H1 (cell line): ENCODE measurements at regions of chr22 and their contacts with region 1.

Region 1: DNA sequence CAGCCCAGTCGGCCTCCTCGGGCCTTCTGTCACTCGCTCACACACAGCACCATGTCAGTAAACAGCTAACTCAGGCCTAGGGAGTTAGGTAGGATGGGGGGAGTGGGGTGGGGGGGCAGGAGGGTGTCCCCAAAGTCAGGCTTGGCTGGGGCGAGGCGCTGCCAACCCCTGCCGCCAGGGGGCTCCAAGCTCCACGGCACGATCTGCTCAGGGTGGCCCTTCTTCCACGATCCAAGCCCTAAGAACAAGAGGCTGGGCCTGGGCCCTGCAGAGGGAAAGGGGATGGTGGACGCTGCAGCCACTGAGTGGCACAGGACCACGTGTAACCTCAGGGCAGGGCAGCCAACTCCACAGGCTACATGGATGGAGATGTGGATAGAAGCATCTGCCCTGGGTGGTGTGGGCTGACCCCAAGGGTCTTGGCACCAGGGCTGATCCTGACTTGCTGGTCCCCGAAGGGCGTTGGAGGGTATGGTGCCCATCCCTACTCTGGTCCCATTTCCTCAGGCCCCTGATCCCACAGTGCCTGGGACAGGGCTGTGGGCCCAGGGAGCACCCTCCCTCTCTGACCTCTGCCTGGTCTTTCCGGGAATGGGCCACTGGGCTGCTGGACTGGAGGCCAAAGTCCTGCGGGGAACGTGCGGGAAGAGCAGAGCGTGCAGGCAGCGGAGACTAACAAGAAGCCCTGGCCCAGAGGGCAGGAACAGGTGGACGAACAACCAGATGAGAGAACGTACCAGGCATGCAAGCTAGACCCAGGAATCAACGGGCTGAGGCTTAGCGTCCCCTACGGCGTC is 29.1 kb upstream of the TXNRD2 start:
- DNase-seq: peak in 1 of 2 experiments; percentile 96
- H3K4me3 ChIP-seq: no peak overlapping the region
- H3K27ac ChIP-seq: no peak overlapping the region
- H3K4me1 ChIP-seq: peaks cover 3 to 11% (median 10%) of the 10 kb centered on the region in 4 experiments; a peak in 6 of 7 replicates
- H3K27me3 ChIP-seq: no peaks in the 10 kb centered on the region
- CTCF ChIP-seq: peak; percentile 89 to 99 (median 93)
- EP300 ChIP-seq: no peak
- POLR2A ChIP-seq: no peak
- RAD21 ChIP-seq: peak; percentile 92 to 93

Region 2: GRCh38 chr22:19479357-19480172 is 491.1 kb before region 1 on chr22 and contains the start of gene CDC45:
- CTCF ChIA-PET with region 1: no interaction called
- POLR2A ChIA-PET with region 1: no interaction called
- DNase-seq: peak; percentile 88
- H3K4me3 ChIP-seq: peak within 1 kb of the TSS; percentile 87 to 99 (median 94)
- H3K27ac ChIP-seq: peak within 1 kb of the TSS; percentile 100
- H3K4me1 ChIP-seq: peaks cover 0 to 8% (median 1%) of the 10 kb centered on the region in 4 experiments; a peak in 2 of 7 replicates
- H3K27me3 ChIP-seq: no peaks in the 10 kb centered on the region
- CTCF ChIP-seq: no peak
- EP300 ChIP-seq: no peak
- POLR2A ChIP-seq: peak; percentile 73 to 86
- RAD21 ChIP-seq: no peak
- total RNA-seq, gene CDC45: 31.9 and 32.6 TPM in 2 replicates

Region 3: DNA sequence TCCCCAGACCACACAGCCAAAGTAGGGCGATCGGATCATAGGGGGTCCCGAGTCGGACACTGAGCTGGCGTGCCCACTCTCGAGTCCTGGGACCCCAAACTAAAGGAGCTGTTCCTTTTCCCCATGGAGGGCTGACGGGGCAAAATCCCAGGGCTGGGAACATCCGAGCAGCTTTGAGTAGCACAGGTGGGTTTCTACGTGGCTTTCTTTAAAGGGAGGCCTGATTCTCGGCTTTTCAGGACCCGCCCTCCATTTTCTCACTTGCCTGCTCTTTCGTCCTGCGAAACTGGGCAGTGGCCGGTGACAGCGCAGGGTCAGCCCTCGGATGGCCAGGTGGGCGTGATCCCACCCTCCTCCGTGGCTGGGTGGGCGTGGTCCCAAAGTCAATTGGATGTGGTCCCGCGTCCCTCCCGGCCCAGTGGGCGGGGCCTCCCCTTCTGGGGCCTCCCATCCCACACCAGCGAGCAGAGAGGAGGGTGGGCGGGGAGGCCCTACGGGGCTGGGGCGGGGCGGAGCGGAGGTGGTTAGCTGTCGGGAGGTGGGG is 11.6 kb before region 1 on chr22:
- CTCF ChIA-PET with region 1: interaction called, 15 read pairs
- POLR2A ChIA-PET with region 1: interaction called, 6 read pairs
- DNase-seq: peak; percentile 81 to 98
- H3K4me3 ChIP-seq: peak overlapping the region; percentile 38 to 61 (median 52); a peak in 7 of 8 replicates
- H3K27ac ChIP-seq: no peak overlapping the region
- H3K4me1 ChIP-seq: peaks cover 0 to 23% (median 18%) of the 10 kb centered on the region in 4 experiments; a peak in 6 of 7 replicates
- H3K27me3 ChIP-seq: no peaks in the 10 kb centered on the region
- CTCF ChIP-seq: no peak
- EP300 ChIP-seq: no peak
- POLR2A ChIP-seq: peak in 1 of 2 experiments; percentile 61; a peak in 2 of 3 replicates
- RAD21 ChIP-seq: no peak

Region 4: GRCh38 chr22:19986410-19987341 is 16.0 kb after region 1 on chr22:
- CTCF ChIA-PET with region 1: interaction called, 58 read pairs
- POLR2A ChIA-PET with region 1: interaction called, 13 read pairs
- DNase-seq: peak in 1 of 2 experiments; percentile 89
- H3K4me3 ChIP-seq: peak overlapping the region; percentile 74 to 88 (median 82)
- H3K27ac ChIP-seq: peak overlapping the region; percentile 57; the same call in 1 of the 2 replicates
- H3K4me1 ChIP-seq: peaks cover 0 to 17% (median 11%) of the 10 kb centered on the region in 4 experiments; a peak in 5 of 7 replicates
- H3K27me3 ChIP-seq: no peaks in the 10 kb centered on the region
- CTCF ChIP-seq: no peak
- EP300 ChIP-seq: no peak
- POLR2A ChIP-seq: peak in 1 of 2 experiments; percentile 80; a peak in 2 of 3 replicates
- RAD21 ChIP-seq: no peak

Region 5: DNA sequence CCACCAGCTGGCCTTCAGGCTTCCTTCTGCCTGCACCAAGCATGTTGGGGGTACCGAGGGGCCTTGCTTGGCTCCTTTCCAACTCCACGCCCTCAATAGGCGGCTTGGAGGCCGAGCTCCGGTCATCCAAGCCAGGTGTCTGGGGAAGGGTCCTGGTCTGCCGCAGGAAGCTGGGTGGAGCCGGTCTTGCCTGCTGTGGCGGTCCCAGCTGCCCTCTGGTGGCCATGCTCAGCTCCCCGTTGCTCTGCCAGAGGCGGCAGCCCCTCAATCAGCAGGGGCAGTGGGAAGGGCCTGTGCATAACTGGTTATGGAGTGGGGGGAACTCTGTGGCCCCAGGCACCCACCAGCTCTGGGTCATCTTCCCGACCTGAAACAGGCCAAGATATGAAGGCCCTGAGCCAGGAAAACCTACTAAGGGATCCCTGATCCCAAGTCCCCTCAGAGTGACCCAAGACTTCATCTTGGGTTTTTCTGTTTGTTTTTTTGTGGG is 42.8 kb after region 1 on chr22:
- CTCF ChIA-PET with region 1: interaction called, 369 read pairs
- POLR2A ChIA-PET with region 1: interaction called, 17 read pairs
- DNase-seq: peak; percentile 47 to 85
- H3K4me3 ChIP-seq: no peak overlapping the region
- H3K27ac ChIP-seq: peak overlapping the region; percentile 21; the same call in 1 of the 2 replicates
- H3K4me1 ChIP-seq: peaks cover 0 to 8% (median 3%) of the 10 kb centered on the region in 4 experiments; a peak in 4 of 7 replicates
- H3K27me3 ChIP-seq: peaks cover 11 to 28% (median 24%) of the 10 kb centered on the region in 4 experiments
- CTCF ChIP-seq: peak; percentile 89 to 95 (median 94)
- EP300 ChIP-seq: no peak
- POLR2A ChIP-seq: no peak
- RAD21 ChIP-seq: peak; percentile 89 to 96

Region 6: GRCh38 chr22:20079745-20080444 is 109.2 kb after region 1 on chr22 and contains the start of gene DGCR8:
- CTCF ChIA-PET with region 1: interaction called, 12 read pairs
- POLR2A ChIA-PET with region 1: interaction called, 4 read pairs
- DNase-seq: peak; percentile 64 to 91
- H3K4me3 ChIP-seq: peak within 1 kb of the TSS; percentile 81 to 99 (median 92)
- H3K27ac ChIP-seq: peak within 1 kb of the TSS; percentile 79
- H3K4me1 ChIP-seq: peaks cover 3 to 19% (median 11%) of the 10 kb centered on the region in 4 experiments
- H3K27me3 ChIP-seq: no peaks in the 10 kb centered on the region
- CTCF ChIP-seq: 0 out of 4 replicates have a peak, but pooled peaks of 1 of the 3 experiments have one; percentile 3
- EP300 ChIP-seq: no peak; a peak in 1 of 3 replicates
- POLR2A ChIP-seq: peak; percentile 73 to 89
- RAD21 ChIP-seq: no peak
- total RNA-seq, gene DGCR8: 42.3 and 43.7 TPM in 2 replicates